ENCODE measurements at regions of chr5 and their contacts with region 1.

Region 1: GRCh38 chr5:135466178-135467050 is 14.3 kb upstream of the TIFAB start:
- DNase-seq: peak; percentile 87
- ATAC-seq: peak; percentile 94

Region 2: DNA sequence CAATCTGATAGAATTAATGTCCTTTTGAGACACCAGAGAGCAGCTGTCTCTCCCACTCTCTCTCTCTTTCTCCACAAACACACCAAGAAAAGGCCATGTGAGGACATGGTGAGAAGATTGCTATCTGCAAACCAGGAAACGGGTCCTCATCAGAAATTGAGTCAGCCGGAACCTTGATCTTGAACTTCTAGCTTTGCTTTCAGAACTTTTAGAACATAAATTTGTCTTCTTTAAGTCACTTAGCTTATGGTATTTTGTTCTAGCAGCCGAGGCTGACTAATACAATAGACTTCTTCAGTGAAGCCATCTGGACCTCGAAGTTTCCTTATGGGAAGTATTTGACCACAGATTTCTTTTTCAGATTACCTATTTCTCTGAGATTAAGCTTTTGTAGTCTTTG is 51.2 kb after region 1 on chr5:
- intact Hi-C with region 1: no loop called
- DNase-seq: no peak
- ATAC-seq: no peak

Region 3: DNA sequence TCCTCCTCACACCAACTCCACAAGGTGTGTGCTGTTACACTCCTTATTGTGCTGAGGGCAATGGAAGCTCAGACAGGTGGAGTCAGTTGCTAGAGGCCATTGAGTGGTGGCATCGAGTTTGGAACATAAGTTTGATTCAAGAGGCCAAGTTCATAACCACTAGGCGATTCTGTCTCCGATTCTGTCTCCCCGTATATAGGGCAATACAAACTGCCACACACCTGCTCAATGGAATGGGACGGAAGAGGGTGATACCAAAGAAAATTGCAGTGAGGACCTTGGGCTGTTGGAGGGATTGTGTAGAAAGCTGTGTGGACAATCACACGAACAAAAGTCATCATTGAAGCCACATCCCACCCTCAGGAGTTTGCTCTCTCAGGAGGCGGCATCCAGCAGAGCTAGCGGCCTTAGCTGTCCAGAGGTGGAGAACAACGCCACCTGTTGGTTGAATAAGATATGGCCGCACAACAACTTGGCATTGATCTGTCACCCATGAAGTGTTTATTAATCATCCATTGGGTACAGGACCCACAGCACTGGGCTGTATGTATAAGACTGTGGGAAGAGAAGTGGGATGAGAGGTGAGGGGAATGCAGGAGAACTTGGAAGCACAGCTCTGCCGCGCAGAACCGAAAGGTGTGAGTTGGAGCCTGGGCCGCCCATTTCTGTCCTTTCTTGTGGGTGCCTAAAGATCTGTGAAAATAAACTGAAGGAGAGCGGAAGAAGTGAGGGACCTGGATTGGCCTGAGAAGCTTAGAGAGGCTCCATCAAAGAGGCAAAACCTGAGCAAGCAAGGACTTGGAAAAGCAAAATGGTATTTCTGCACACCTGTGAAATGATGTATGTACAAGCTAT is 85.4 kb after region 1 on chr5:
- intact Hi-C with region 1: loop called (anchors 5 kb)
- DNase-seq: peak; percentile 79
- ATAC-seq: peak; percentile 80

Region 4: GRCh38 chr5:135944967-135945560 is 478.6 kb after region 1 on chr5:
- intact Hi-C with region 1: no loop called
- DNase-seq: peak; percentile 70
- ATAC-seq: peak; percentile 68

Measured in sciatic nerve (tissue), 2 donors.